Posterior cingulate gyrus (tissue), 11 donors: ENCODE measurements at regions of chr17 and their contacts with region 1.

Region 1: DNA sequence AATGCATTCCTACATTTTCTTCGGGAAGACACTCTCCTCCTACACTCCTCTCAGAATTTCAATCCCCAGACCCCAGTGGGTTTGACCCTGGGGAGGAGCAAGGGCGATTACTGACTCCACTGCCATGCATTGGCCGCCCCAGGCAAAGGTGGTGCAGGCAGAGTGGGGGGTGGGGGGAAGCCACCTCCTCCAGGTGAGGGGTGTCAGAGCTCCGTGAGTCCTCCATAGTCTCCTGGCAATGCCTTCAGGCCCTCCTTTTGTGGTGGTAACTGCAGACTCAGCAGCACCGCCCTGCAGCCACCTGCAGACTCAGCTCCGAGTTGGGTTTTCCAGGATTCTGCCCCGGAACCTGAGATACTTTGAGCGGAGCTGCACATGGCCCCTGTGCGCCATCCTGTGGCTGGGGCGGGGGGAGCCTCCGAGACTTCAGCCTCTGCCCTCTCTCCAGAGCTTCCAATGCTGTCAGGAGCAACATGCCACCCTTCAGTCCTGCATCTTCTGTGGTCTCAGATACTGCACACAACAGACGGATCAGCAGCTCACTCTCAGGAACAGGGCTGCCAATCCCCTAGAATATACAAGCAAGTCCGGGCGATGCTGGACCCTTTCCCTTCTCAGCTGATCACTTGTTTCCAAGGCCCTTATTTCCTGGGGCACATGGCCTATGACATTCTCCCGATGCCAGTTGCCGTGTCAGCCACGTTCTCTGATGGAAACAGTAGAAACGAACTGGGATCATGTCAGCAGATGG is 2.4 kb upstream of the SLC47A2 start:
- DNase-seq: peak in 1 of 10 donors; percentile 56

Region 2: GRCh38 chr17:19664136-19664820 is 54.5 kb before region 1 on chr17:
- intact Hi-C with region 1: loop called (anchors 10 kb)
- DNase-seq: no peak

Region 3: DNA sequence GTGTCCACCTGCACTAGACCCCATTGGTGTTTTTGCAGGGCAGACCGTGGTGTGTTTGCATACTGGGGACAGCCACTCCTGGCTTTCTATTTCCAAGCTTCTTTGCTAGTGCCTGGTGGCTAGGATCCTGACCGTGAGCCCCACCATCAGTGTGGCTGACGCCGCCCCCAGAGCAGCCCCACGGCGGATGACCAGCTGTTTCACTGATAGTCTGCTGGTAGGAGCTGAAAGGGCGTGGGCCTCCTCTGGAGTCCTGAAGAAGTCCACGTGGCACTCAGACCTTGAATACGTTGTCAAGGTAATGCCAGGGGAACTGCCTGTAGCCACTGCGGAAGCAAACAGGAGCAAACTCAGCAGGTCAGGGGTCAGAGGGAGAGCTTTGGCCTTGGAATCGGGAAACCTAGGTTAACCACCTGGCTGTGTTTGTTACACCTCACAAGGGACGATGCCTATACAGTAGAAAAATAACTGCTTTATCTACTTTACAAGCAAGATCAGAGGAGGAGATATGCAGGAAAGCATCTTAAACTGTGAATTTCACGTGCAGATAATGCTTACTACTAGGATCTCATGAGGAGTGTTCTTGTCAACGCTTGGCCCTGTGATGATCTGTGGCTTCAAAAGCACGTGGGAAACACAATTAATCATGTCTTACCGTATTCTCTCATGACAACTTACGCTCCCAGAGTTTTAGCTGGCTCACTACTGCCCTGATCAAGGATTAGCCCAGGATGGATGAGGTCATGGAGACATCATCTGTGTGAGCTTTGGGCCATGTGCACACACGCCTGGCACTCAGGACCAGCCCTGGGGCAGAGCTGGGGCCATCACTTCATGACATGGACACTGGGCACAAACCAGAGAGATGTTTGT is 40.0 kb before region 1 on chr17:
- intact Hi-C with region 1: no loop called
- DNase-seq: peak in 1 of 10 donors; percentile 79